ENCODE measurements at regions of chr5 and their contacts with region 1.

Region 1: DNA sequence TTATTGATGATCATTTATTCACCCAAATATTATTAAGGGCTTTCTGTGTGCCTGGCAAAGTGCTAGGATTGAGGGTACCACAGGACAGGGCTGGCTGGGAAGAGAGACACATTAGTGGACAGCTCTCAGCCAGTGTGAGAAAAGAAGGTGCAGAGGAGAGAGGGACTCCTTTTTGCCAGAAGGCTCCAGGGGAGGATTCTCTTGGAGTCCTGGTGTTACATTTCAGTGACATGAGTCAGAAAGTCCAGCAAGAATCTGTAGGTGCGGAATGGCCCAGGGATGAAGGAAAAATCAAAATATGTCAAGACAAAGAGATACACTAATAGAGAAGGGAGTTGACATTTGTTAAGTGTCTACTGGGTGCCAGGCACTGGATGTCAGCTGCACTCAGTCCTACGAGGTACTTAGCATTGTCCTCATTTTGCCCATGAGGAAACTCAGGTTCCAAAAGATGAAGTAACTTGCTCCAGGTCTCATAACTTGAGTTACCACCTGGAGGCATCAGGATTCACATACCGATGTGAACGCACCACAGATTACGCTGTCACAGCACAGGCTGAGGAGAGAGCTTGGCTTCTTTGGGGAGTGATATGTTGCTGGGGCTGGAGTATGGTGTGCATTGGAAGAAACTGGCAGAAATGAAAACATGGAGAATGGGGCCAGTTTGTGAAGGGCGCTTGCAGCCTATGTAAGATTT is 60.5 kb downstream of the RASGRF2 start:
- DNase-seq: no peak
- H3K4me3 Mint-ChIP-seq: no peak overlapping the region
- H3K27ac Mint-ChIP-seq: no peak overlapping the region
- H3K4me1 Mint-ChIP-seq: peaks cover 61% of the 10 kb centered on the region
- H3K27me3 Mint-ChIP-seq: no peaks in the 10 kb centered on the region

Region 2: GRCh38 chr5:80998590-80998979 is 22.0 kb before region 1 on chr5:
- intact Hi-C with region 1: loop called (anchors 2 kb)
- DNase-seq: peak; percentile 71
- H3K4me3 Mint-ChIP-seq: peak overlapping the region; percentile 82
- H3K27ac Mint-ChIP-seq: peak overlapping the region; percentile 90
- H3K4me1 Mint-ChIP-seq: peaks cover 25% of the 10 kb centered on the region
- H3K27me3 Mint-ChIP-seq: no peaks in the 10 kb centered on the region

Region 3: DNA sequence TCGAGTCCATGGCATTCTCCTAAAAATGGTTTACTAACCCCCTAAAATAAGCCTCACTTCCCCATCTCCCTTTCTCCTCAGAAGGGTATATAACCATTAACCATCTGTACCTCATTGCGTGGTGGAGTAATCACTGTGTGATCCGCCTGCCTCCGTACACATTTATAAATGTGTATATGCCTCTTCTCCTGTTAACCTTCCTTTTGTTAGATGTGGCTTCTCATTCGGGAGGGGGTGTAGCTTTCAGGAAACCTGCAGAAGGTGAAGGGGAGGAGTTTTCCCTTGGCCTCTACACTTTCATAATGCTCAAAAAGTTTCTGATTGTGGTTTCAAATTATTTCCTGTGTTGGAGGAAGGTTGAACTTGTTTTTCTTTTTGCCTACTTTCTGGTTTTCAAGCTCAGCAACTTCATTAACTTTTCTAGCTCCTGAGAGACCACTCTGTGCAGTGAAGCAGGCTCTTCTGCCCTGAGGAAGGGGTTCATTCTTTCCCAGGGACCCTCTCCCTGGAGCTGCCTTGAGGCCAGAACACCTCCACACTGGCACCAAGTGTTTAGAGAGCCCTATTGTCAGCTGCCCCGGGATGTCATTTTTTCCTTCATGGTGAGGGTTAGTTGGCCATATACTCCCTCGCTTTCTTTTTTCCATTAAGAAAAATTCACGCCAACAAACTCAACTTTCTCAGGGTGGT is 13.5 kb before region 1 on chr5:
- intact Hi-C with region 1: loop called (anchors 1 kb)
- DNase-seq: peak; percentile 89
- H3K4me3 Mint-ChIP-seq: peak overlapping the region; percentile 82
- H3K27ac Mint-ChIP-seq: peak overlapping the region; percentile 94
- H3K4me1 Mint-ChIP-seq: peaks cover 41% of the 10 kb centered on the region
- H3K27me3 Mint-ChIP-seq: no peaks in the 10 kb centered on the region

Region 4: GRCh38 chr5:81045389-81045807 is 24.8 kb after region 1 on chr5:
- intact Hi-C with region 1: loop called (anchors 2 kb)
- DNase-seq: no peak
- H3K4me3 Mint-ChIP-seq: no peak overlapping the region
- H3K27ac Mint-ChIP-seq: no peak overlapping the region
- H3K4me1 Mint-ChIP-seq: peaks cover 6% of the 10 kb centered on the region
- H3K27me3 Mint-ChIP-seq: no peaks in the 10 kb centered on the region